Activated B cell treated with CpG ODN at 0.5 μM for 24 hours (primary cell): ENCODE measurements at regions of chr15 and their contacts with region 1.

Region 1: GRCh38 chr15:99592145-99592791 is 26.5 kb downstream of the MEF2A start:
- DNase-seq: no peak
- ATAC-seq: no peak
- H3K4me3 Mint-ChIP-seq: no peak overlapping the region
- H3K27ac Mint-ChIP-seq: peak overlapping the region; percentile 25
- H3K4me1 Mint-ChIP-seq: peaks cover 71% of the 10 kb centered on the region
- H3K27me3 Mint-ChIP-seq: no peaks in the 10 kb centered on the region
- CTCF ChIP-seq: no peak

Region 2: DNA sequence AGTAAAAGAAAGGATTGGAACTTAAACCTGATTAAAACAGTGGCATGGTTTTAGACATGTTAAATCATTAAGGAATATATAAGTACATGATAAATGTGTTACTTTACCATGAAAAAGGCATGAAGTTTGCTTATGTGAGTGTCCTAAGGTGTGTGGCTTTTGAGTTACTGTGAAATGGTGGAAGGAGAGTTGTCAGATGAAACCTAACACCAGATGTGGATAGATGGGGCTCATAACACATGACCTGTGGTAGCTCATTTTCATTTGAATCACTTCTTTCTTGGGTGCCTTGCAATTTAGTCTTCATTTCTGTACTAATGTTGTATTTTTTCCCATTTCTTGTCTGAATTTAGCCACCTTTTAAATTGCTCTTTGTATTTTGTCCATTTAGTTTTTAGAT is 13.5 kb before region 1 on chr15:
- CTCF ChIA-PET with region 1: no interaction called
- POLR2A ChIA-PET with region 1: no interaction called
- intact Hi-C with region 1: loop called (anchors 2 kb)
- DNase-seq: no peak
- ATAC-seq: no peak
- H3K4me3 Mint-ChIP-seq: peak overlapping the region; percentile 29
- H3K27ac Mint-ChIP-seq: peak overlapping the region; percentile 4
- H3K4me1 Mint-ChIP-seq: peaks cover 83% of the 10 kb centered on the region
- H3K27me3 Mint-ChIP-seq: no peaks in the 10 kb centered on the region
- CTCF ChIP-seq: no peak

Region 3: GRCh38 chr15:99613887-99614647 is 21.8 kb after region 1 on chr15:
- CTCF ChIA-PET with region 1: no interaction called
- POLR2A ChIA-PET with region 1: no interaction called
- intact Hi-C with region 1: loop called (anchors 2 kb)
- DNase-seq: no peak
- ATAC-seq: no peak
- H3K4me3 Mint-ChIP-seq: peak overlapping the region; percentile 50
- H3K27ac Mint-ChIP-seq: peak overlapping the region; percentile 72
- H3K4me1 Mint-ChIP-seq: peaks cover 74% of the 10 kb centered on the region
- H3K27me3 Mint-ChIP-seq: no peaks in the 10 kb centered on the region
- CTCF ChIP-seq: no peak